ENCODE measurements at regions of chr10 and their contacts with region 1.

Region 1: DNA sequence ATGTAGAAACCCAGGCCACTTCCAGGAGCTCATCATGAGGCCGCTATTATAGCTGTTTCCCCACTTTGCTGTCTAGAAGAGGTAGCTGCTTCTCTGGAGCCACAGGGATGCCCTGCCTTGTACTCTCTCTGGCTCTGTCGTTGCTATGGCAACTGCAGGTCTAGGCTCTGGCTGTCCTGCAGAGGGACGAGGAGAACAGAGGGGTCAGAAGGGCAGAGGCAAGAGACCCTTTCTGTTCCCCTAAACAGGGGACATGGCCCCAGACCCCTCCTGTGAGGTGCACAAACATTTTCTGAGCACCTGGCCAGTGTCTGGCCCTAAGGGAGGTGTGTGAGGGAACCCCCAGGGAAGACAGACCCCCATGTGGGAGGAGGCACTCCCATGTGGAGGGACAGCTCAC is 31.4 kb downstream of the ITPRIP start:
- DNase-seq: no peak
- H3K4me3 Mint-ChIP-seq: no peak overlapping the region
- H3K27ac Mint-ChIP-seq: no peak overlapping the region
- H3K4me1 Mint-ChIP-seq: peaks cover 9% of the 10 kb centered on the region
- H3K27me3 Mint-ChIP-seq: no peaks in the 10 kb centered on the region
- CTCF ChIP-seq: no peak

Region 2: GRCh38 chr10:103618575-103619423 is 688.1 kb before region 1 on chr10:
- CTCF ChIA-PET with region 1: no interaction called
- intact Hi-C with region 1: no loop called
- DNase-seq: no peak
- H3K4me3 Mint-ChIP-seq: no peak overlapping the region
- H3K27ac Mint-ChIP-seq: no peak overlapping the region
- H3K4me1 Mint-ChIP-seq: no peaks in the 10 kb centered on the region
- H3K27me3 Mint-ChIP-seq: no peaks in the 10 kb centered on the region
- CTCF ChIP-seq: no peak

Region 3: GRCh38 chr10:104254493-104255310 is 52.2 kb before region 1 on chr10 and contains the start of gene GSTO1:
- CTCF ChIA-PET with region 1: no interaction called
- intact Hi-C with region 1: no loop called
- DNase-seq: peak; percentile 56
- H3K4me3 Mint-ChIP-seq: peak within 1 kb of the TSS; percentile 84
- H3K27ac Mint-ChIP-seq: peak within 1 kb of the TSS; percentile 56
- H3K4me1 Mint-ChIP-seq: peaks cover 19% of the 10 kb centered on the region
- H3K27me3 Mint-ChIP-seq: no peaks in the 10 kb centered on the region
- CTCF ChIP-seq: no peak
- total RNA-seq, gene GSTO1: 59.2 and 61.5 TPM in 2 replicates

Region 4: GRCh38 chr10:104322416-104322782 is 15.5 kb after region 1 on chr10:
- CTCF ChIA-PET with region 1: no interaction called
- intact Hi-C with region 1: no loop called
- DNase-seq: no peak
- H3K4me3 Mint-ChIP-seq: no peak overlapping the region
- H3K27ac Mint-ChIP-seq: no peak overlapping the region
- H3K4me1 Mint-ChIP-seq: peaks cover 9% of the 10 kb centered on the region
- H3K27me3 Mint-ChIP-seq: peaks cover 20% of the 10 kb centered on the region
- CTCF ChIP-seq: no peak

Region 5: GRCh38 chr10:104337974-104338735 is 31.3 kb after region 1 on chr10 and contains the start of gene ITPRIP:
- CTCF ChIA-PET with region 1: interaction called, 13 read pairs
- intact Hi-C with region 1: no loop called
- DNase-seq: peak; percentile 39
- H3K4me3 Mint-ChIP-seq: peak within 1 kb of the TSS; percentile 99
- H3K27ac Mint-ChIP-seq: peak within 1 kb of the TSS; percentile 88
- H3K4me1 Mint-ChIP-seq: peaks cover 13% of the 10 kb centered on the region
- H3K27me3 Mint-ChIP-seq: peaks cover 28% of the 10 kb centered on the region
- CTCF ChIP-seq: no peak
- total RNA-seq, gene ITPRIP: 1.5 and 1.7 TPM in 2 replicates

Region 6: DNA sequence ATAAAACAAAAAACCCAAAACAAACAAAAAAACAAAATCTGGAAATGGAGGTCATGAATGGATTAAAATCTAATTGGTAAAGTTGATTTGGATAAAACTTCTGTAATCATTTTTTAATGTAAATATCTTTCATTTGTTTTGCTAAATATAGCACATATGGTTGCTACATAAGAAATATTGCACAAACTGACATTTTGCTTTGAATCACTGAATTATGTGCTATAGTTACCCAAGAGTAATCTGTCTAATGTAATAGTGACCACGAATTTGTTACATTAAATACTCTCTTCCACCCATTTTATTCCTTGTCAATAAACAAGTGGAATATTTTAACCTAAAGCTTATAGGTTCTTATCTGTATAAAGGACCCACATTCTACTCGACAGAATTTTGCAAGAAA is 52.9 kb after region 1 on chr10:
- CTCF ChIA-PET with region 1: no interaction called
- intact Hi-C with region 1: no loop called
- DNase-seq: no peak
- H3K4me3 Mint-ChIP-seq: no peak overlapping the region
- H3K27ac Mint-ChIP-seq: no peak overlapping the region
- H3K4me1 Mint-ChIP-seq: no peaks in the 10 kb centered on the region
- H3K27me3 Mint-ChIP-seq: peaks cover 32% of the 10 kb centered on the region
- CTCF ChIP-seq: no peak

Measured in Calu3 (cell line).